ENCODE measurements at regions of chr5 and their contacts with region 1.

Region 1: DNA sequence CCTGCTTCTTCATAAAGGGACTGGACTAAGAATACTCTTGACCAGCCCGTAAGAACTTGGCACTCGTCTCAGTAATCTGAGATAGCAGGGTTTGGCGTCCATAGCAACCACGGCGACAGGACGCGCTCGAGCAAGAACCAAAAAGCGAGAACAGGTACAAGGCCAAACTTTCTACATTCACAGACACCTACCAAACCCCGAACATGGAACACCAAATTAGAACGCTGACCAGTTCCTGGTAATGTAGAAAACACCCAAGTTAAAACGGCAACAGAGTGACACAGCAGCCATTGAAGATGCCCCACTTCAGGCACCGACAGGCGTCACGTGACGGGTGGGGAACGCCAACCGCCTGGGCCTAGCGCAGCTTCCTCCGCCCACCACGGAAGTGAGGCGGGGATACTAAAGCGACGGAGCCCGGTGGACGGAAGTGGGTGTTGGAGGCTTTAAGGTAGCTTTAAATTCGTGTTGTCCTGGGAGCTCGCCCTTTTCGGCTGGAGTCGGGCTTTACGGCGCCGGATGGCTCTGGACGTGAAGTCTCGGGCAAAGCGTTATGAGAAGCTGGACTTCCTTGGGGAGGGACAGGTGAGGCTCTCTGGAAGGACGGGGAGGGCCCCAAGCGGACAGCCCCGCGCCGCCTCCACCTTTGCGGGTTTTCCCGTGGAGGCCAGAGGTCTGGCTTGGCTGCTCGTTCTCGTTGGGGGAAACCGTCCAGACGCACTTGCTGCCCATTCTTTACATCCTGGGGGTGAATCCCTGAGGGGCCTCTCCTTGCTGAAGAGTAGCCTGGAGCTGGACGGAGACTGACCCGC is at the start of gene CDK7:
- DNase-seq: peak; percentile 88
- ATAC-seq: peak; percentile 100
- H3K4me3 Mint-ChIP-seq: peak within 1 kb of the TSS; percentile 97
- H3K27ac Mint-ChIP-seq: peak within 1 kb of the TSS; percentile 88
- H3K4me1 Mint-ChIP-seq: peaks cover 35% of the 10 kb centered on the region
- H3K27me3 Mint-ChIP-seq: no peaks in the 10 kb centered on the region
- CTCF ChIP-seq: no peak
- total RNA-seq, gene CDK7: 27.1 and 33.5 TPM in 2 replicates

Region 2: GRCh38 chr5:69189162-69190086 is 45.2 kb before region 1 on chr5 and contains the start of gene CENPH:
- CTCF ChIA-PET with region 1: no interaction called
- POLR2A ChIA-PET with region 1: interaction called, 5 read pairs
- intact Hi-C with region 1: loop called (anchors 1 kb)
- DNase-seq: peak; percentile 88
- ATAC-seq: peak; percentile 92
- H3K4me3 Mint-ChIP-seq: peak within 1 kb of the TSS; percentile 92
- H3K27ac Mint-ChIP-seq: peak within 1 kb of the TSS; percentile 90
- H3K4me1 Mint-ChIP-seq: peaks cover 14% of the 10 kb centered on the region
- H3K27me3 Mint-ChIP-seq: no peaks in the 10 kb centered on the region
- CTCF ChIP-seq: no peak
- total RNA-seq, gene CENPH: 13.0 and 13.5 TPM in 2 replicates